ENCODE measurements at regions of chr11 and their contacts with region 1.

Region 1: DNA sequence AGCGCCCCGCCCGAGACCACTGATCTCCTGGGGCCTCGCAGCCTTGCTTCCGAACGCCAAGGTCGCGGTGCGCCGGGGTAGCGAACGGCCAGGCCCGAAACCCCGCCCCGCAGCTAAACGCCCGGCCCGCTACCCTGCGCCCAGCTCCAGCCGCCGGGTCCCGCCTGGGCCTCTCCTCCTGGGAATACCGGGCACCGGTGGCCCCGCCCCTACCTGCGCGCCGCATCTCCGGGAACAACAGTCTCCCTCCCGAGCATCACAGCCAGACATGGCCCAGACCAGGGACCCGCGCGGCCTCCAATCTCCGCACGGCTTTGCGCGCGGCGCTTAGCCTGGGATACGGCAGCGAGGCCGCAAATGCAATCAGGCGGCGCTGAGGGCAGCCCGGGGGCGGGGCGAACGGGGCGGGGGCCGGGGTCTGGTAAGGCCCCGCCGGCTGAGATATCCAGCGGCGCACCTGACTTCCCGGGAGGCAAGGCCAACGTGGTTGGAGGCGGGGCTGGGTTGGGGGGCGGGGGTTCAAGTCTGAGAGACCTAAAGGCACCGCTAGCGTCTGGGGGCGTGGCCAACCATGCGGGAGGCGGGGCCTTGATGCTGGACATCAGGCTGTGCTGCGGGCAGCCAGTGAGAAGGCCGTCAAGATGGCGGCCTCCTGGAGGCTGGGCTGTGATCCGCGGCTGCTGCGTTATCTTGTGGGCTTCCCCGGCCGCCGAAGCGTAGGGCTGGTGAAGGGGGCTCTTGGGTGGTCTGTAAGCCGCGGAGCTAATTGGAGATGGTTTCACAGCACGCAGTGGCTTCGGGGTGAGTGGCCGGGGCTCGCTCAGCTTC is at the starts of genes APIP and PDHX:
- DNase-seq: peak; percentile 90
- H3K4me3 Mint-ChIP-seq: peak within 1 kb of the TSS; percentile 98
- H3K27ac Mint-ChIP-seq: peak within 1 kb of the TSS; percentile 91
- H3K4me1 Mint-ChIP-seq: peaks cover 42% of the 10 kb centered on the region
- H3K27me3 Mint-ChIP-seq: no peaks in the 10 kb centered on the region
- total RNA-seq, gene APIP: 26.3 and 26.8 TPM in 2 replicates
- total RNA-seq, gene PDHX: 32.0 TPM in 2 replicates

Region 2: DNA sequence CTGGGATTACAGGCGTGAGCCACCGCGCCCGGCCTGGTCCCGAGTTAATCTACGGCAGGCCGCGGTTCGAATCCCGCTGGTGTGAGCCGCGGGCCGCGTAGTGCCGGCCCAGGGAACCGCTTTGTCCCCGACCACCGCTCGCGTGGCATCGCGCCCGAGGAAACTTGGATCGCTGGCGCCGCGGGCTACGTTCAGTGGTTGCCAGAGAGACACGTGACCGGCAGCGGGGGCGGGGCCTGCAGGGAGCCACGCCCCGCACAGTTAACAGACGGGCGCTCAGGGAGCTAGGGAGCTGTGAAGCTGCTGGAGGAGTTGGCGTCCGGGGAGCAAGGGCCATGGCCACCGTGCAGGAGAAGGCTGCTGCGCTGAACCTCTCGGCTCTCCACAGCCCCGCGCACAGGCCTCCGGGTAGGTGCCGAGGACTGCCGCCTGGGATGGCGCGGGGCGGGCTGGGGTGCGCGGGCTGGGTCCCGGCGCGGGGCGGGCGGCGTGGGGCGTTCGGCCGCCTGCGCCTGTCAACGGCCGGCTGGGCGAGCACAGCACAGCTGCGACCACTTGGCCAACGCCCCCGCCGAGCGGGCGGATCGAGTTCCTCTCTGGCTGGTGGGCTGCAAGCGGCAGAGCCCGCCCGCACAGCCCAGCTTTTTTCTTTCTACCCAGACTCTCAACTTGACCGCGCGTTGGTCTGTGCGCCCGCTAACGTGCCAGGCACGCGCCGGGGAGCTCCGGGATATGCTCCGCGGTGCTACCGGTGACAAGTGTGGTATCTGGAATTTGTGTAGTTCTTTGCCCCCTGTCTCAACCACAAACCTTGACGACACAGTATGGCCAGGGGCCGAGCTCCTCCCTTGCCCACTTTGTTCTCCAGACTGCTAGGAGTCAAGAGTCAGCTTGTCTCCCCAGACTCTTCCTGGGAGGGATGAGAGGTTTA is 1900.3 kb before region 1 on chr11 and contains the start of gene DEPDC7:
- intact Hi-C with region 1: loop called (anchors 10 kb)
- DNase-seq: peak; percentile 66
- H3K4me3 Mint-ChIP-seq: peak within 1 kb of the TSS; percentile 79
- H3K27ac Mint-ChIP-seq: no peak within 1 kb of the TSS
- H3K4me1 Mint-ChIP-seq: peaks cover 18% of the 10 kb centered on the region
- H3K27me3 Mint-ChIP-seq: peaks cover 41% of the 10 kb centered on the region
- total RNA-seq, gene DEPDC7: 0.26 and 0.61 TPM in 2 replicates

Region 3: DNA sequence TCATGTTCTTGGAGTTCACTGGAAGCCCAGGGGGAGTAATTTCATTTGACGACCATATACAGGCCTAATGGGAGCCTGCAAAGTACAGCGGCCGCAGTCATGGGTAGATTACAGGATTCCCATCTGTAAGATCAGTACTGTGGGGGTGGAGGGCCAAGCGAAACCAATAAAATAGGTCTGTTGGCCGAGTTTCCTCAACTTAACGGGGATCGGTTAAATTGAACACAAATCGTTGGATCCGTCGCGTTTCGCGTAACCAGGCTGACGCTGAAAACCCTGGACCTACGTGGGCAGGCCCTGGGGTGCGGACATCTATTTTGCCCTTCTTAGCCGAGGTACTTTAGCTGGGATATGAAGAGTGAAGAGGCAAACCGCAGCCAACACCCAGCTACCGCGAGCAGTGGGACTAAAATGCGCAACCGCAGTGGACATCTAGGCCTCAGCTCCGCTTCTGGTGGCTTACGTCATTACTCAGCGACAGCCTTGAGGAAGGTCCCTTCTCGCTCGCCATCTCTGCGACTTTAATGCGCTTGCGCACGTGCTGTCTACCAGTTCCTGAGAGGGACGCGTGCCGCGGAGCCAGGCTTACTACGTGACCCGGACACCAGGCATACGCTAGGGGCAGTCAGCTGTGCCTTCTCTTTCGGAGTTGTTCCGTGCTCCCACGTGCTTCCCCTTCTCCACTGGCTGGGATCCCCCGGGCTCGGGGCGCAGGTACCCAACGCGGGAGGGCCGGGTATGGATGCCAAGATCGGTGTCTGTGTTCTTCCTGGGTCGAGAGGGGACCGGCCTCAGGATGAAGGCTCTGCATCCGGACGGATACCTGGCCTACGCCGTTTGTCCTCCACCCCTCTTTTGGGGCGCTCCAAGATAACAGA is 810.9 kb before region 1 on chr11 and contains the start of gene NAT10:
- intact Hi-C with region 1: loop called (anchors 1 kb)
- DNase-seq: peak; percentile 97
- H3K4me3 Mint-ChIP-seq: peak within 1 kb of the TSS; percentile 95
- H3K27ac Mint-ChIP-seq: peak within 1 kb of the TSS; percentile 90
- H3K4me1 Mint-ChIP-seq: peaks cover 48% of the 10 kb centered on the region
- H3K27me3 Mint-ChIP-seq: no peaks in the 10 kb centered on the region
- total RNA-seq, gene NAT10: 157 and 158 TPM in 2 replicates

Region 4: GRCh38 chr11:34653826-34654490 is 262.3 kb before region 1 on chr11:
- intact Hi-C with region 1: loop called (anchors 1 kb)
- DNase-seq: no peak
- H3K4me3 Mint-ChIP-seq: no peak overlapping the region
- H3K27ac Mint-ChIP-seq: no peak overlapping the region
- H3K4me1 Mint-ChIP-seq: peaks cover 21% of the 10 kb centered on the region
- H3K27me3 Mint-ChIP-seq: peaks cover 66% of the 10 kb centered on the region

Region 5: DNA sequence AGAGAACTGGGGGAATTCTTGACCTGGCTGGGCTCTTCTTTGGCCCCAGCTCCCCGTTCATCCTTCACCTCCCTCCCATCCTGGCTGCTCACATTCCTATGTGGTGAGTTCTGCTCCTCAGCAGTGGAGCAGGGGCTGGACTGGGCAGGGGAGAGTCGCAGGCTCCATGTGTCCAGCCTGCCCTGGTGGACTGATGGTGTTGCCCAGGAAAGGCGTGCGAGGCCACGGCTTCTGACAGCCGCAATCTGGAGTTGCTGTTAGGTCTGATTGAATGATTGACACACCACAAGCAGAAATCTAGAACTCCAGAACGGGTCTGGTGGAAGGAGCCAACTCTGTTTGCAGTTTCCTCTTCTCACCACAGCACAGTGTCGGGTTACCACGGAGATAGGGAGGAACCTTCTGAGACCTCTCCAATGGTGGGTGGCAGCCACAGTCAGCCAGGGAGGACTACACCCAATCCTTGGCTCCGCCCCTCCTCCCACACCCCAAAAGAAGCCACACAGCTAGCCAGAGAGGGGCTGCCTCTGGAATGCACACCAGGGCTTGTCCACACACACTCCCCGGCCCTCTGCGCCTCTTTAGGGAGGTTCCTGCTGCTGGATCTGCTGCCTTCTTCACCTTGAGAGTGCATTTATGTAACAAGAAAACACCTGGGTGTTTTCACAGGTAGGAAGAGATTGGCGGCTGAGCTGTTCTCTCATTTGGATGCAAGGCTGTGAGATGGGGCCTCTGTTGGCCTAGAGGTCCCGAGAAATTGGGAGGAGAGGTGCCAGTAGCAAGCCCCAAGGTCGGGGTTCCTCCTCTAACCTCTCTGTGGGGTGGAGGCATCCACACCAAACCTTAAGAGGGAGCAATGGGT is 166.3 kb after region 1 on chr11:
- intact Hi-C with region 1: loop called (anchors 2 kb)
- DNase-seq: peak; percentile 85
- H3K4me3 Mint-ChIP-seq: peak overlapping the region; percentile 56
- H3K27ac Mint-ChIP-seq: peak overlapping the region; percentile 91
- H3K4me1 Mint-ChIP-seq: peaks cover 82% of the 10 kb centered on the region
- H3K27me3 Mint-ChIP-seq: no peaks in the 10 kb centered on the region

Region 6: GRCh38 chr11:35165423-35166368 is 249.5 kb after region 1 on chr11:
- intact Hi-C with region 1: loop called (anchors 1 kb)
- DNase-seq: peak; percentile 92
- H3K4me3 Mint-ChIP-seq: peak overlapping the region; percentile 63
- H3K27ac Mint-ChIP-seq: peak overlapping the region; percentile 97
- H3K4me1 Mint-ChIP-seq: peaks cover 100% of the 10 kb centered on the region
- H3K27me3 Mint-ChIP-seq: no peaks in the 10 kb centered on the region

Region 7: DNA sequence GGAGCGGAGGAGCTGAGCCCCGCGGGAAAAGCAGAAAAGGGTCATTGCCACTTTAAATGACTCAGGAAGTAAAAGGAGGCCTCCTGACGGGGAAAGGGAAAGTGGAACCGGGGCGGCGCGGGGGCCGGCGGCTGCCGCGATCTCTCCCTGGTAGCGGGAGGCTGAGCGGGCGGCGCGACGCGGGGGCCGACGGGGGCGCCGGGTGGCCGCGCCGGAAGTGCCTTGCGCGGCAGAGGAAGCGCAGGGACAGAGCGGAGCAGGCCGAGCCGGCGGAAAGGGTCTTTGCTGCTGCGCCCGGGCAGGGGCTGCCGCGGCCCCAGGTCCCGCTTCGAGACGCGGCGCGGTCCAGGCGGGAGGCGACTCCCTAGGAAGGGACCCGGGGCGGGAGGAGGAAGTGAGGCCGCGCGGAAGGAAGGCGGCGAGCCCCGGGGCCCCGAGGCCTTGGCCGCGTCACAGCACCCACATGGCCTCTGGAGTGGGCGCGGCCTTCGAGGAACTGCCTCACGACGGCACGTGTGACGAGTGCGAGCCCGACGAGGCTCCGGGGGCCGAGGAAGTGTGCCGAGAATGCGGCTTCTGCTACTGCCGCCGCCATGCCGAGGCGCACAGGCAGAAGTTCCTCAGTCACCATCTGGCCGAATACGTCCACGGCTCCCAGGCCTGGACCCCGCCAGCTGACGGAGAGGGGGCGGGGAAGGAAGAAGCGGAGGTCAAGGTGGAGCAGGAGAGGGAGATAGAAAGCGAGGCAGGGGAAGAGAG is 746.6 kb after region 1 on chr11 and contains the start of gene TRIM44:
- intact Hi-C with region 1: loop called (anchors 1 kb)
- DNase-seq: peak; percentile 79
- H3K4me3 Mint-ChIP-seq: peak within 1 kb of the TSS; percentile 89
- H3K27ac Mint-ChIP-seq: peak within 1 kb of the TSS; percentile 93
- H3K4me1 Mint-ChIP-seq: peaks cover 33% of the 10 kb centered on the region
- H3K27me3 Mint-ChIP-seq: peaks cover 18% of the 10 kb centered on the region
- total RNA-seq, gene TRIM44: 24.3 and 27.6 TPM in 2 replicates